Panc1 (cell line): ENCODE measurements at regions of chr3 and their contacts with region 1.

Region 1: DNA sequence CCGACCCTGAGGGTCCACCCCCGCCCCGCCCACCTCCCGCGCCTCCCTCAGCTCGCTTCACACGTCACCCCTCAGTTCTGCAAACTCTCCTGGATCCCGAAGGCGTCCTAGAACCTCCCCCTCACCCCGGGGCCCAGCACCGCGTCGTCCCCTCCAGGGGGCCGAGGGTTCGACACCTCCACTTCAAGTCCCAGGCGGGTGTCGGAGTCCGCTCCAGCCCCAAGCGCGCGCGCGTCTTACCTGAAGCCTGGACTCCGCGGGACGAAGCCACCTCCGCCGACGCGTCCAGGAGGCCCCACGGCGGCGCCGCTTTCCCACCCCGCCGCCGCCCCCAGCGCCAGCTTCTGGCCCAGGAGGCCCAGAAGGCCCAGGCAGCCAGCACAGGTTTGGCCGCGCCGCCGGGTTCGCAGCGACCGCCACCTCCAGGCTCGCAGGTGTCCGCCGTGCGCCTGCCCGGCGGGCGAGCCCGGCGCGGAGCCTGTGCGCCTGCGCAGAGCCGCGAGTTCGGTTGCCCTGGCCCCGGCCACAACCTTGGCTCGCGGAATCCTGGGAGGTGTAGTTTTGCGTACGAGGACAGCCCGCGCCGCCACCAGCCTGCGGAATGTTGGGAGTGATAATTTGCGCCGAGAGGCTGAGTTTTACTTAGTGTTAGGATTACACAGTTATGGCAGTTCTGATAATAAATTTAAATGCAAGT is at the start of gene POMGNT2:
- DNase-seq: peak; percentile 12
- ATAC-seq: peak; percentile 99
- H3K4me3 ChIP-seq: peak within 1 kb of the TSS; percentile 58 to 68
- H3K27ac ChIP-seq: no peak within 1 kb of the TSS
- H3K4me1 ChIP-seq: peaks cover 3% of the 10 kb centered on the region; the same call in 1 of the 2 replicates
- H3K27me3 ChIP-seq: no peaks in the 10 kb centered on the region
- CTCF ChIP-seq: no peak
- total RNA-seq, gene POMGNT2: 10.1 TPM

Region 2: DNA sequence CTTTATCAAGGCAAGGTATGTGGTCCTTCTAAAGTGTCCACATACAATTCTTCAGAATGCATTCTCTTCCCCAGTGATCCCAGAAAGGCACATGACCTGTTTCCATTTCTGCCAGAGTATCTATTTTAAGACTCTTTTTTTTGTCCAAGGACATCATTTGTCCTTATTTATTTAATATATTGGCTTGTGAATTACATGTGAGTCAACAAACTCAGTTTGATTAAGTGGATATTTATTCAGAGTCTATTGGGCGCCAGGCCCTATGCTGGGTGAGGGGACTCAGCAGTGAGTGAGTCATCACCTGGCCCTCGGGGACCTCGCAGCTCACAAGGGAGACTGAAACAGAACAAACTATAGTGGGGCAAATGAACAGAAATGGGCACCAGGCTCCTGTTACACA is 317.4 kb after region 1 on chr3:
- CTCF ChIA-PET with region 1: no interaction called
- POLR2A ChIA-PET with region 1: interaction called, 13 read pairs
- in situ Hi-C with region 1: no loop called
- intact Hi-C with region 1: no loop called
- DNase-seq: no peak
- ATAC-seq: no peak
- H3K4me3 ChIP-seq: no peak overlapping the region
- H3K27ac ChIP-seq: no peak overlapping the region
- H3K4me1 ChIP-seq: no peaks in the 10 kb centered on the region
- H3K27me3 ChIP-seq: no peaks in the 10 kb centered on the region
- CTCF ChIP-seq: no peak

Region 3: DNA sequence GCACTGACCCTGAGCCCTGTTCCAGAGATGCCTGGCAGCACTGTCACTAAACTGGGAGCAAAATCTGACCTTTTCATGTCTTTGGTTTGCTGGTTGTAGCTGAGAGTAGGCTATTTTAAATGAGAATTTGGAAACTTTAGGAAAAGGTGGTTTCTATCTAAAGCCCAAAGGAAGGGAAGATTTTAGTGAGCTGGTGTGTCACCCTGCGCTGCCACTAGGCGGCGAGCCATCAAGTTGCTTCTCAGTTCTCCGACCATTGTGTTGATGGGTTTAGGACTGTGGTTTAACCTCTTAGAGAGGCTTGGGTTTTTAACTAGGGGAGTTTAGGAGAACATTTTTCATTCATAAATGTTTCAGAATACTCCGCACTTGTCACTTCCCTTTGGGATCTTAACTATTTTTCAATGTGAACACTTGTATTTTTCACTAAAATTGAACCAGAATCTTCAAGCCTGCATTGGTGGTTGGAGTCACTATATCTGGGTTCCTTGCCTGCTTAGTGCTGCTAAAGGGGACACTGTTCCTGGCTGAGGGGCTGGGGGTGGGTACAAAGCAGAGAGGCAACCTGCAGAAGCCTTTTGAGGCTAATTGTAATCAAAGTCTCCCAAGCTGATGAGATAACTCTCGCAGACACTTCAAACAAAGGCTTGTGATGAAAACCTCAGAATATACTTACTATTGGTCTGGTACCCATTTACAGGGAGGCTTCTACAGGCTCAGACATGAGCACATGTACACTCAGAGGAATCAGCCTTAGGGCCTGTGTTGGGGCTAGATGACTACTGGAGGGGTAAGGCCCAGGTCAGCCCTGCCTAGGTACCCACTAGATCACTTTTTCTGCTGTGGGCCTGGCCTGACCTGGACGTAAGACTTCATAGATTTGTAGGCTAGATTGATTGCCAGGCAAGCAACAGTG is 1887.1 kb after region 1 on chr3:
- CTCF ChIA-PET with region 1: no interaction called
- POLR2A ChIA-PET with region 1: no interaction called
- in situ Hi-C with region 1: no loop called
- intact Hi-C with region 1: no loop called
- DNase-seq: no peak
- ATAC-seq: 0 out of 2 replicates have a peak, but pooled peaks have one; percentile 48
- H3K4me3 ChIP-seq: no peak overlapping the region
- H3K27ac ChIP-seq: no peak overlapping the region
- H3K4me1 ChIP-seq: no peaks in the 10 kb centered on the region; the same call in 1 of the 2 replicates
- H3K27me3 ChIP-seq: no peaks in the 10 kb centered on the region
- CTCF ChIP-seq: peak; percentile 82